Panc1 (cell line): ENCODE measurements at regions of chr5 and their contacts with region 1.

Region 1: DNA sequence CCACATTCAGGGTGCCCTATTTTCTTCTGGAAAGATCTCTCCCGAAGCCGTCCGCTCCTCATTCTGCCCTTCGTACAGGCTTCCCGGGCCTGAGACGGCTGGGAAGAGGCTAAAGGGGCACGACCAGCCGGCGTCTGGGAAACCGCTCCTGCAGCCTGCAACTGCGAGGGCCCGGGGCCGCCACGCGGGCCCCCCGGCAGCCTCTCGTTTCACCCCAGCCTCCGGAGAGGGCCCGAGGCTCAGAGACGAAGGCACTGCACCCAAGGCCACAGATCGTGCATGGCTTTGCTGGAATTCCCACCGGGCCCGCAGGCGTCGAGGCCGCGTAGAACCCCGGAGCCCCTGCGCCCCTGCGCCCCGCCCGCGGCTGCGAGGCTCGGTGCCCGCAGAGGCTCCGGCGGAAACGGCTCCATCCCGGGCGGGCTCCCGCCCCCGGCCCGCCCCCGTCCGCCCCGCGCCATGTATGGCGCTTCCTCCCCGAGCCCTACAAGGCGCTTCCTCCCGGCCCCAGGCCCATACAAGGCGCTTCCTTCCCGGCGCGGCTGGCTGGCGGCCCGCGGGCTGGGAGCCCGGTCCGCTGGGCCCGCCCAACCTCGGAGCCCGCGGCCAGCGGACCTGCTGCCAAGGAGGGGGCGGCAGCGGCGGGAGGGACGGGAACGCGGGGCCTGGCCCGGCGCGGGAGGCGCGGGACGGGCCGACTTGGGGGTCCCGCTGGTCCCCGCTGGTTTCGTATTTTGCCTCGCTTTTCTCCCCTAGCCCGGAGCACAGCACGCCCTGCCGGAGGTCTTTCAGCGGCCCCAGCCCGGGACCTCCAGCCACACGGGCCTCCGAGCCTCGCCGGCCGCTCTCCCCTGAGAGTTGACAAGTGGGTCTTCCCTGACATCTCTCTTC is 26.6 kb downstream of the EGR1 start:
- DNase-seq: peak; percentile 18
- ATAC-seq: peak; percentile 96
- H3K4me3 ChIP-seq: peak overlapping the region; percentile 45 to 65
- H3K27ac ChIP-seq: 0 out of 2 replicates have a peak overlapping the region, but pooled peaks have one; percentile 36
- H3K4me1 ChIP-seq: peaks cover 4% of the 10 kb centered on the region; the same call in 1 of the 2 replicates
- H3K27me3 ChIP-seq: no peaks in the 10 kb centered on the region
- CTCF ChIP-seq: no peak

Region 2: DNA sequence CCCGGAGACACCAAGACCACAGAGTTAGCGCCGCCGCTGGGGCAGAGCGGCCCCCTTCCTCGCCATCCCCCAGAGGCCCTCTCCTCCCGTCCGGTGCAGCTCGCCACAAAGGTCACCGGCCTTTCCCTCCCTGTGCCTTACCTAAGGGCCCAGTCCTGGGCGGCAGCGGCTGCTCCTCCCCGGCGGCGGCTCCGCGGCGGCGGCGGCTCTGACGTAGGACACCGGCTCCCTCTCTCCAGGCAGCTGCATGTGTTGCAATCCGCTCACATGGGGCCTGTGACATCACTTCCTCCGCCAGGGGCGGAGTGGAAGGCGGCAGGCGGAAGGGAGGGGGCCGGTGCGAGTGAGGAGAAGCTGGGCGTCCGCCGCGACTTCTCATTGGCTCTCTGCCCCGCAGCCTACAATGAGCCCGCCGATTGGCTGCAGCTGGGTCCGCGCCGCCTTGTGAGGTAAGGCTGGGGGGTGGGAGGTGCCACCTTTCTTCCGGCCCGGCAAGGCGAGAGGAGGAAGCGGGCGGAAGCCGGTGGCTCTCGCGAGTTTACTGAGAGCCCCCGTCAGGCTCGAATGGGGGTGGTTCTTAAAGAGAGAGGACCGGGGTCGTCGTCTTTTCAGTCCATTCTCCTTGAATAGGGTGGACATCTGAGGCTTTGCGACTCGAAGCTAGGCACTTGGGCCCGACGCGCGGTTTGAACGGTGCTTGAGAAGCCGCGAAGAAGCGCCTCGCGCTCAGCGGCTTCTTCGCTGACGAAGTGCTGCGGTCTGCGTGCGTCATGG is 51.2 kb after region 1 on chr5 and contains the start of gene ETF1:
- CTCF ChIA-PET with region 1: no interaction called
- POLR2A ChIA-PET with region 1: interaction called, 10 read pairs
- in situ Hi-C with region 1: no loop called
- intact Hi-C with region 1: no loop called
- DNase-seq: peak; percentile 92
- ATAC-seq: peak; percentile 95
- H3K4me3 ChIP-seq: peak within 1 kb of the TSS; percentile 90 to 97
- H3K27ac ChIP-seq: peak within 1 kb of the TSS; percentile 95
- H3K4me1 ChIP-seq: peaks cover 37% of the 10 kb centered on the region
- H3K27me3 ChIP-seq: no peaks in the 10 kb centered on the region
- CTCF ChIP-seq: no peak
- total RNA-seq, gene ETF1: 168 TPM

Region 3: DNA sequence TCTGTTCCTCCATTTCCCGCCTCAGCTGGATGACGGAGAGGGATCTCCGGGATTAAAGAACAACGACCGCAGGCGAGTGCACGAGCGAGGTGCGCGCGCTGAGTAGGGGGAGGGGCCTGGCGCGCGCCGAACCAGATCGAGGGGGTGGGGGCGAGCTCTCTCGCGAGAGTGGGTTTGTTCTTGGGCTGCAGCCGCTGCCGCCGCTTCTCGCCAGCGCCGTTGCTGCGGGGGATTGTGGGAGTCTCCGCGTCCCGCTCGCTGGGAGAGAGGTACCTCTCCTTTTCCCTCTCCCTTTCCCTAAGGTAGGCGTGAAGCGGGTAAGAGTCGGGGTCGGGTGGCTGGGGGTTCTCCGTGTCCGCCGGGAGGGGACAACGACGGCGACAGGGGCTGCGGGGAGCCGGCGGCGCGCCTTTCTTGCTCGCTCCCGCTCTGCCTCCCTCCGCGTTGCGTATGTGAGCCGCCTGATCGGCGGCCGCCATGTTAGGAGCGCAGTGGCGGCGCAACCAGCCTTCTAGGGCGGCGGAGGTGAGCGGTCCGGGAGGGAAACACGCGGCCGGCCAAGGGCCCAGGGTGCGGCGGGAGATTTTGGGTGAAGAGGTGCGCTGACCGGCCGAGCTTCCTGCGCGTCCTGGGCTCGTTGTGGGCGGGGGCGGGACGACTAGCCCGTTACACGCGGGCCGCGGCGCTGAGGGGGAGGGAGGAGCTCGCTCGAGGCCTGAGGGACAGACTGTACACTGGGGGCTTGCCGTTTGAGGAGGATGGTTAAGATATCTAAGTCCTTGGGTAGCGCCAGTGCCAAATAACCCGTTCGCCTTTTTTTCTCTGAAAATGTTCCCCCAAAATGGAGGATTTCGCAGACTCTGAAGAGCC is 801.8 kb after region 1 on chr5 and contains the start of gene MATR3:
- CTCF ChIA-PET with region 1: no interaction called
- POLR2A ChIA-PET with region 1: interaction called, 10 read pairs
- in situ Hi-C with region 1: no loop called
- intact Hi-C with region 1: no loop called
- DNase-seq: peak; percentile 84
- ATAC-seq: peak; percentile 91
- H3K4me3 ChIP-seq: peak within 1 kb of the TSS; percentile 78 to 90
- H3K27ac ChIP-seq: peak within 1 kb of the TSS; percentile 94
- H3K4me1 ChIP-seq: peaks cover 31% of the 10 kb centered on the region
- H3K27me3 ChIP-seq: no peaks in the 10 kb centered on the region
- CTCF ChIP-seq: no peak
- total RNA-seq, gene MATR3: 194 TPM